ENCODE measurements at regions of chr3 and their contacts with region 1.

Region 1: GRCh38 chr3:33636125-33636850 is 81.8 kb downstream of the CLASP2 start:
- DNase-seq: no peak
- ATAC-seq: no peak
- H3K4me3 ChIP-seq: no peak overlapping the region
- H3K27ac ChIP-seq: no peak overlapping the region
- H3K4me1 ChIP-seq: no peaks in the 10 kb centered on the region
- H3K27me3 ChIP-seq: no peaks in the 10 kb centered on the region
- CTCF ChIP-seq: peak; percentile 23 to 79 (median 64)

Region 2: DNA sequence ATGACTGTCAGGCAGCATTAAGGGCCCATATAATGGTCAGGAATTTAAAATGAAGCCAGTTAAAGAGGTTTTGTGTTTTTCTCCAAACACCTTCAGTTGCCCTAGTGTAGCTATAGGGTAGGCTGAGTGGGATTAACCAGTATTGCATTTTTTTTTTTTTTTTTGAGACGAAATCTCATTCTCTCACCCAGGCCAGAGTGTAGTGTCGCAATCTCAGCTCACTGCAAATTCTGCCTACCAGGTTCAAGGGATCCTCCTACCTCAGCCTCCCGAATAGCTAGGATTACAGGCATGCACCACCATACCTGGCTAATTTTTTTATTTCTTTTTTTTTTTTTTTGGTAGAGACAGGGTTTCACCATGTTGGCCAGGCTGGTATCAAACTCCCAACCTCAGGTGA is 74.8 kb after region 1 on chr3:
- intact Hi-C with region 1: loop called in 8 of 10 experiments (anchors 2 to 5 kb)
- DNase-seq: no peak
- ATAC-seq: no peak
- H3K4me3 ChIP-seq: no peak overlapping the region
- H3K27ac ChIP-seq: no peak overlapping the region
- H3K4me1 ChIP-seq: peaks cover 0 to 15% (median 4%) of the 10 kb centered on the region in 9 donors
- H3K27me3 ChIP-seq: no peaks in the 10 kb centered on the region
- CTCF ChIP-seq: no peak

Region 3: GRCh38 chr3:33773637-33774036 is 137.3 kb after region 1 on chr3:
- intact Hi-C with region 1: loop called in 2 of 10 experiments (anchors 5 kb)
- DNase-seq: no peak
- ATAC-seq: no peak
- H3K4me3 ChIP-seq: no peak overlapping the region
- H3K27ac ChIP-seq: no peak overlapping the region
- H3K4me1 ChIP-seq: no peaks in the 10 kb centered on the region
- H3K27me3 ChIP-seq: no peaks in the 10 kb centered on the region
- CTCF ChIP-seq: no peak

Region 4: DNA sequence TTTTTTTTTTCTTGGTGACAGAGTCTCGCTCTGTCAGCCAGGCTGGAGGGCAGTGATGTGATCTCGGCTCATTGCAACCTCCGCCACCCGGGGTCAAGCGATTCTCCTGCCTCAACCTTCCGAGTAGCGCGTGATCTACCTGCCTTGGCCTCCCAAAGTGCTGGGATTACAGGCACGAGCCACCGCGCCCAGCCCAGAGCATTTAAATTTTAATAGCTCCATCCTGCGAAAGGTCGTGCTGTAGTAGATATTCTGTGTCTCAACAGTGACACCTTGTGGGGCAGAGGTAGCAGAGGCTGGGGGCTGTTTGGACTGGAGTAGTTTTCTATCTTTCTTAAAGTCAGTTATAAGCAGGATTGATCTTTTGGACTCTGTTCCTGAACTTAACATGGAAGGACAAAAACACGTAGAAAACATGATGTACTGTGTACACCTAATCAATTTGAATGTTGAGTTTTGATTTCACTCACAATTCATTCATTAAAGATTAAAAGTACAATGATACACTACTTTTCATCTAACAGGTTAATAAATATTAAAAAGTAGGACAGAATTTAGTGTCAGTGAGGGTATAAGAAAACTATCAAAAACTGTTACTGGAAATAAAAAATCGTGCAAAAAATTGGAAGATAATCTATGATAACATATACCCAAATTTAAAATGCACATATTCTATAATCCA is 151.2 kb after region 1 on chr3:
- intact Hi-C with region 1: loop called in 9 of 10 experiments (anchors 1 to 10 kb)
- DNase-seq: peak in 1 of 2 donors; percentile 57
- ATAC-seq: peak; percentile 71 to 93 (median 85)
- H3K4me3 ChIP-seq: peak overlapping the region in 7 of 10 donors; percentile 11 to 43 (median 35)
- H3K27ac ChIP-seq: no peak overlapping the region
- H3K4me1 ChIP-seq: peaks cover 0 to 9% (median 0%) of the 10 kb centered on the region in 9 donors
- H3K27me3 ChIP-seq: no peaks in the 10 kb centered on the region
- CTCF ChIP-seq: peak; percentile 58 to 91 (median 79)

Measured in heart right ventricle (tissue), 16 donors.